ENCODE measurements at regions of chr11 and their contacts with region 1.

Region 1: GRCh38 chr11:62542750-62543567 is 3.6 kb downstream of the AHNAK start:
- DNase-seq: peak; percentile 91
- ATAC-seq: peak; percentile 38

Region 2: DNA sequence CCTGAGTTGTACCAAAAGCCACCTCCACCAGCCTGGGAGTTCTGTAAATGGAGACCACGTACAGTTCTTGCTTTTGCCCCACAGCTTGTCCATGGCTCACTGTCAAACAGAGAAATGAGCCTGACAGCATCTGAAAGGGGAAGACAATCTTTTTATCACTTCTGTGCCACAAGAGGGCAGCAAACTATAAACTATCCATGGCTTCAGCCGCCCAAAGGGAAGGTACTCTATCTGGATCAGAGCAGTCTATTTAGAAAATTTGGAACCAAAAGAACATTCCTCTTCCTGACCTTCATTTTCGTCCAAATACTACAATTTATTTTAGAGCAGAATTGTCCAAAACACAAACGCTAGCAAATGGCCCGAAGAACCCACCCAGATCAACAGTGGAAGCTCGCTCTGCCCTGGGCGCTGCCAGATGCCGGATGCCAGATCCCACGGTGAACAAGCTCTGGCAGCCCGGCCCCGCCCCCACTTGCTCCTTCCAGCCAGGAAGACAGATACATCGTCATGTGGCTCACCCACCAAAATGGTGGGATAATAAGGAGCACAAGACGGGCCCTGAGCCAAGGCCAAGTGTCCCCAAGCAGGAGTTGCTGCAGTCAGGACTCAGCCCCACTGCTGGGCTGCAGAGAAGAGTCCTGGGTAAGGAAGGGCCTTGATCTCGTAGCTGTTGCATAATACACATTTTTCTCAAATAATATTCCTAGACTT is 148.0 kb before region 1 on chr11:
- intact Hi-C with region 1: loop called (anchors 10 kb)
- DNase-seq: peak; percentile 89
- ATAC-seq: peak; percentile 83

Region 3: GRCh38 chr11:62439785-62440602 is 103.0 kb before region 1 on chr11:
- intact Hi-C with region 1: loop called (anchors 10 kb)
- DNase-seq: no peak
- ATAC-seq: peak; percentile 35

Region 4: DNA sequence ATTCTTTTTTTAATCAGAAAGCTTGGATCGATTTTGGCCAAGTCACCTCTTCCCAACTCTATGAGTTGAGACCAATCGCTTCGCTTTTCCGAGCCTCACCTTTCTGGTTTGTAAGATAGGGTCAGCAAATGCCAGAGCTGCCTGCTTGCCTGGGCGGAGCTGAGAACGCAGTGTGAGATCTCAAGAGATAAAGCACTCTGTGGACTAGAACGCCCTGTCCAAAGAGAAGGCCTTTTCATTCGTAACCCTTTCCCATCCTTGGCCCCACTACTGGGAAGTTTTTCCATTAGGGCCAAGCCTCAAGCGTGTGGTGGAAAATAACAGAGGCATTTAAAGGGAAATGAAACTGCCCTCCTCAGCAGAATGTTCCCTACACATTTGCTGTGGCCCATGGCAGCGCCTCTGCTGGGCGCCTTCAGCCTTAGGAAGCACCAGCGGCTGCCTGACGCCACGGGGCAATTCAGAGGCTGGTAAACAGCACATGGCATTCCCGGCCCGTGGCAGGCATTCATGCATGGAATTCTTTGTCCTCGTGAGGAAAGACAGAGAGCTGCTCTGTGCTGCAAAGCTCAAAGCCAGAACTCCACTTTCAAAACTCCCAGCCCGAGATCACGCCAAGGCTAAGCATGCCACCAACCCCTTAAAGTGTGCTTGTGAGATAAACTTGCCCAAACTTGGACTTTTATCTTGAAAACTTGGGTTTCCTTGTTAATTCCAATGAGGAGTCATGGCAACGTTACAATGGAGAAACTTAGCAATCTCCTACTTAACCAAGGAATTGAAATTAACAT is 34.5 kb before region 1 on chr11:
- intact Hi-C with region 1: loop called (anchors 5 kb)
- DNase-seq: peak; percentile 90
- ATAC-seq: peak; percentile 87

Measured in left ventricle myocardium superior (tissue), 1 donor.